Activated CD4-positive, alpha-beta memory T cell treated with anti-CD3 and anti-CD28 coated beads for 36 hours (primary cell): ENCODE measurements at regions of chr17 and their contacts with region 1.

Region 1: GRCh38 chr17:64648234-64648633 is 13.9 kb downstream of the SMURF2 start:
- DNase-seq: no peak
- H3K4me3 Mint-ChIP-seq: no peak overlapping the region
- H3K27ac Mint-ChIP-seq: no peak overlapping the region
- H3K4me1 Mint-ChIP-seq: peaks cover 28% of the 10 kb centered on the region
- H3K27me3 Mint-ChIP-seq: no peaks in the 10 kb centered on the region

Region 2: DNA sequence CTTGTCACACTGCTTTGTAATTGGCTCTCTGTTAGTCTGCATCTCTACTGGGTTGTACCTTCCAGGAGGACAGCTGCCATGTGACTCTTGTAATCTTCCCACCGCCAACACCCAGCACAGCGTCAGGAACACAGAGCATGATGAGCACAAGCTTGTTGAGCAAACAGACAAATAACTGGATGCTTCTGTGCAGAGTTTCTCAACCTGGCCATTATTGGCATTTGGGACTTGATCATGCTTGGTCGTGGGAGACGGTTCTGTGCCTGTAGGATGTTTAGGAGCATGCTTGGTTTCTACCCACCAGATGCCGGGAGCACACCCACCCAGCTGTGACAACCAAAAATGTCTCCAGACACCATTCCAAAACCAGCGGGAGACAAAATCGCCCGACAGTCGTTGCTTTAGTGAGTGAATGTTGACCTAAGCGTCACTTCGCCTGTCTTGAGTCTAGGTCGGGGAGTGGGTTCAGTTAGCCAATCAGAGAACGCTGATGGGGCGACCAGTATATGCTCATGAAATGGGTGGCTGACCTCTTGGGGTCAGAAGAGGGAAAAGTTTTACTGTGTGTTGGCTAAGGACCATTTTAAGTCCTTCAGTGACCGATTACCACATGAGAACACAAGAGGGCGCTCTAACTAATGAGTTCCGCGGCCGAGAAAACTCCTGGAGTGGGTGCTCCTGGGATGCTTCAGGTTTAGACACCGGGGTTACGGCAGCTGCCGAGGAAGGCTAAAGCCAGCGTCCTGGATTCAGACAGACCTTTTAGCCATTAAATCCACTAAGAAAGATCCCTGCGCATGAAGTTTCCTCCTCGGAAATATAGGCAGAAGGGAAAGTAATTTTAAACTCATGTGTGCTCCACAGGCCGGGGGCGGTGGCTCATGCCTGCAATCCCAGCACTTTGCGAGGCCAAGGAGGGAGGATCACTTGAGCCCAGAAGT is 327.4 kb before region 1 on chr17:
- CTCF ChIA-PET with region 1: no interaction called
- POLR2A ChIA-PET with region 1: no interaction called
- intact Hi-C with region 1: loop called (anchors 5 kb)
- DNase-seq: peak; percentile 64
- H3K4me3 Mint-ChIP-seq: no peak overlapping the region
- H3K27ac Mint-ChIP-seq: no peak overlapping the region
- H3K4me1 Mint-ChIP-seq: no peaks in the 10 kb centered on the region
- H3K27me3 Mint-ChIP-seq: no peaks in the 10 kb centered on the region

Region 3: GRCh38 chr17:64496786-64497564 is 151.3 kb before region 1 on chr17 and contains the start of gene POLG2:
- CTCF ChIA-PET with region 1: interaction called, 22 read pairs
- POLR2A ChIA-PET with region 1: interaction called, 6 read pairs
- intact Hi-C with region 1: loop called (anchors 2 kb)
- DNase-seq: peak; percentile 97
- H3K4me3 Mint-ChIP-seq: peak within 1 kb of the TSS; percentile 96
- H3K27ac Mint-ChIP-seq: peak within 1 kb of the TSS; percentile 93
- H3K4me1 Mint-ChIP-seq: peaks cover 74% of the 10 kb centered on the region
- H3K27me3 Mint-ChIP-seq: no peaks in the 10 kb centered on the region
- total RNA-seq, gene POLG2: 25.8 to 28.1 TPM

Region 4: GRCh38 chr17:64572638-64573154 is 75.5 kb before region 1 on chr17:
- CTCF ChIA-PET with region 1: interaction called, 12 read pairs
- POLR2A ChIA-PET with region 1: no interaction called
- intact Hi-C with region 1: no loop called
- DNase-seq: no peak
- H3K4me3 Mint-ChIP-seq: no peak overlapping the region
- H3K27ac Mint-ChIP-seq: peak overlapping the region; percentile 83
- H3K4me1 Mint-ChIP-seq: peaks cover 11% of the 10 kb centered on the region
- H3K27me3 Mint-ChIP-seq: no peaks in the 10 kb centered on the region

Region 5: DNA sequence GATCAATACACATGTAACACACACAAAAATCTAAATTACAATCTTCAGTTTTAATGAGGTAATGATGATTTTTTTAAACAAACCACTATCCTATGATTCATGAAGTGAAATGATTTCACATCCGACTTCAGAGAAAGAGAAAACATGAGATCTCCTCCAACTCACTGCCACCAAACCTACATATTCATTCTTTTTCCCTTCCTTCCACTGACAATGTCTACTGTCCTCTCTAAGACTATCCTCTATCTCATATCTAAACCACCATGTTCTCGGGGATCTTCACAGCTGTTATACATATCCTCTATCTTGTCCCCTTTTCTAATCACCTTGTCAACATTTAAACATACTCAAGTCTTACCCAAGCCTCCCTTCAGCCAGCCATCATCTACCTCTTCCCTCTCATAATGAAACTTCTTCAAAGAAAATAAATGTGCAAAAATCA is 39.7 kb before region 1 on chr17:
- CTCF ChIA-PET with region 1: interaction called, 10 read pairs
- POLR2A ChIA-PET with region 1: no interaction called
- intact Hi-C with region 1: loop called (anchors 5 kb)
- DNase-seq: no peak
- H3K4me3 Mint-ChIP-seq: peak overlapping the region; percentile 28
- H3K27ac Mint-ChIP-seq: peak overlapping the region; percentile 78
- H3K4me1 Mint-ChIP-seq: peaks cover 34% of the 10 kb centered on the region
- H3K27me3 Mint-ChIP-seq: no peaks in the 10 kb centered on the region